GM18951 (cell line): ENCODE measurements at regions of chr11 and their contacts with region 1.

Region 1: GRCh38 chr11:71059662-71060061 is 192.7 kb downstream of the SHANK2 start:
- POLR2A ChIP-seq: no peak

Region 2: DNA sequence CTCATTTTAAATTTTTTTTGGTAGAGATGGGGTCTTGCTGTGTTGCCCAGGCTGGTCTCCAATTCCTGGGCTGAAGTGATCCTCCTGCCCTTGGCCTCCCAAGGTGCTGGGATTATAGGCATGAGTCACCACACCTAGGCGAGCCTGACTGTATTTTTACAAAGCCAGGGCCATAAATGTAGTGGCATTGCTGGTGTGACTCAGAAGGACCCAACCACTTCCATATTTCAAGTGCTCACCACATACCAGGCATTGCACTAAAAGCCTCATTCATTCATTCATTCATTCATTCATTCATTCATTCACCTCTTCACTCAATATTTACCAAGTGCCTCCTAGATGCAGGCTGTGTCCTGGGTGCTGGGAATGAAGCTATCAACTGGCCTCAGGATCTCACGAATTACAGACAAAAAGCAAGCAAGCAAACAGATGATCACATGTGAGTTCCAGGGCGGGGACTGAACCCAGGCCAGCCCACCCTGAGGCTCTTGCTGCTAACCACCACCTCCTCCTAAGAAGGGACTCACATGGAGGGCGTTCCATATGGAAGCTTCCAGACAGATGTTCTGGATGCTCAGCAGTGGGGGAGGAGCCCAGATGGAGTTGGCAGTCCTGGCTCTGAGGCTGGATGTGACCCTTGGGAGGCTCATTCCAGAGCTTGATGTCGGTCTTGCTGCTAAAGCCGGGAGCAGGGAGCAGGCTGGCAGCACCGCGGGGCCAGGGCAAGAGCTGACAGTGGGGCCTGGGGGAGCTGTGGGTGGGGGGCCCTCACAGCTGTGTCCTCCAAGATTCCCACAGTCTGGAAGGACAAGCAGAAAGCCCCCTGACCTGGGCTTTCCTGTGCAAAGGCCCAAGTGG is 502.5 kb before region 1 on chr11:
- in situ Hi-C with region 1: no loop called
- POLR2A ChIP-seq: no peak

Region 3: GRCh38 chr11:70952191-70952590 is 107.5 kb before region 1 on chr11:
- in situ Hi-C with region 1: loop called (anchors 5 kb)
- POLR2A ChIP-seq: no peak

Region 4: GRCh38 chr11:72278911-72279310 is 1219.2 kb after region 1 on chr11:
- in situ Hi-C with region 1: no loop called
- POLR2A ChIP-seq: no peak